Breast epithelium (tissue), 4 donors: ENCODE measurements at regions of chr3 and their contacts with region 1.

Region 1: DNA sequence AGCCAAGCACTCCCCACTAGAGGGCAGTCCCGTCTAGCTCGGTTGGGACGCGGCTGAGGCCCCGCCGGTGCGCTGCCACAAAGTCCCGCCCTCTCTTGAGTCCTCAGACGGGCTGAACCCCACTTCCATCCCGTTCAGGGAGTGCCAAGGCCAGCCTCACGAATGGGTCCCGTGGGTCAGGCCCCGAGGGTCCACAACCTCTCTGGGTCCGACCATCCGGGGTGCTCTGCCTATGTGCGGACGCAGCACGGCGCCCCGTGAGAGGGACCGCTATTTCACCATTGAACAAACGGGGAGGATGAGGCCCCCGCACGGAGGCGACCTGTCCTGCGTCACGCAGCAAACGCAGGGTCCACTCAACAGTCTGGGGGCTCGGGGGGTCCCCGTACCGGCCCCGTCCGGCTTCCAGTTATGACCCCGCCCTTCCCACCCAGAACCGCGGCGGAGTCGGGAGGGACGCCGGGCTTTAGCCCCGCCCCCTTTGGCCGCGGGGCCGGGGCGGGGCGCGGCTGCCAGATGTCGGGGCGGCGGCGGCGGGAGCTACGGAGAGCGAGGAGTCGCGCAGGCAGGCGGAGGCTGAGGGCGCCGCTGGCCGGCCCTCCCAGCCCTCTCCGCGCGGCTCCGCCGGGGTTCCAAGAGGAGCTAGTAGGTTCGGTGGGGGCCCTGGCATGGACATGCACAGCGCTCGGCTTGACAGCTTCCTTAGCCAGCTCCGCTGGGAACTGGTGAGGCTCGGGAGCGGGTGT is at the start of gene INKA1:
- DNase-seq: peak; percentile 80 to 90
- H3K4me3 ChIP-seq: peak within 1 kb of the TSS; percentile 84 to 90 (median 89)
- H3K27ac ChIP-seq: peak within 1 kb of the TSS; percentile 80 to 97
- H3K4me1 ChIP-seq: peaks cover 18 to 29% of the 10 kb centered on the region in 2 donors
- H3K27me3 ChIP-seq: no peaks in the 10 kb centered on the region
- CTCF ChIP-seq: peak; percentile 77 to 91 (median 88)
- POLR2A ChIP-seq: no peak
- total RNA-seq, gene INKA1: 2.3 to 4.5 (median 4.2) TPM

Region 2: DNA sequence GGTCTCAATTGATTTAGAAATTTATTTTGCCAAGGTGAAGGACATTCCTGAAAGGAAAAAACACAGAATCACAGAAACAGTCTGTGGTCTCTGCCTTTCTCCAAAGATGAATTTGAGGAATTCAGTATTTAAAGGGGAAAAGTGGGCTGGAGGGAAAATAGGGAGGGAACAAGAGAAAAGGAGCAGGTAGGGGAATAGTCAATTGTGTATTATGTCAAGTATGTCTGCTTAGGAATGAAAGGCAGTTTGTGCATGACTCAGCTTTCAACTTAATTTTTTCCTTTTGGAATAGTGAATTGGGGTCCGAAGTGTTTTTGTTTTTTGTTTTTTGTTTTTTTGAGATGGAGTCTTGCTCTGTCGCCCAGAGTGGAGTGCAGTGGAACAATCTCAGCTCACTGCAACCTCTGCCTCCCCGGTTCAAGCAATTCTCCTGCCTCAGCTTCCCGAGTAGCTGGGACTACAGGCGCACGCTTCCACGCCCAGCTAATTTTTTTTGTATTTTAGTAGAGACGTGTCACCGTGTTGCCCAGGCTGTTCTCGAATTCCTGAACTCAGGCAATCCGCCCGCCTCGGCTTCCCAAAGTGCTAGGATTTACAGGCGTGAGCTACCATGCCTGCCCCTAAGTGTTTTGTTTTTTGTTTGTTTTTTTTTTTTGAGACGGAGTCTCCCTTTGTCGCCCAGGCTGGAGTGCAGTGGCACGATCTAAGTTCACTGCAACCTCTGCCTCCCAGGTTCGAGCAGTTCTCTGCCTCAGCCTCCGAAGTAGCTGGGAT is 1712.5 kb before region 1 on chr3:
- intact Hi-C with region 1: loop called (anchors 5 kb)
- DNase-seq: no peak
- H3K4me3 ChIP-seq: no peak overlapping the region
- H3K27ac ChIP-seq: peak overlapping the region in 1 of 2 donors; percentile 97
- H3K4me1 ChIP-seq: peaks cover 0 to 10% of the 10 kb centered on the region in 2 donors
- H3K27me3 ChIP-seq: no peaks in the 10 kb centered on the region
- CTCF ChIP-seq: no peak
- POLR2A ChIP-seq: no peak

Region 3: GRCh38 chr3:49841126-49841696 is 38.3 kb after region 1 on chr3:
- intact Hi-C with region 1: loop called (anchors 5 kb)
- DNase-seq: no peak
- H3K4me3 ChIP-seq: no peak overlapping the region
- H3K27ac ChIP-seq: no peak overlapping the region
- H3K4me1 ChIP-seq: no peaks in the 10 kb centered on the region
- H3K27me3 ChIP-seq: no peaks in the 10 kb centered on the region
- CTCF ChIP-seq: no peak
- POLR2A ChIP-seq: no peak